T-cell (primary cell): ENCODE measurements at regions of chr15 and their contacts with region 1.

Region 1: GRCh38 chr15:101088788-101089583 is 162.9 kb downstream of the CHSY1 start:
- DNase-seq: peak; percentile 26 to 82 (median 68)
- ATAC-seq: peak; percentile 88 to 94 (median 89)
- H3K4me3 ChIP-seq: no peak overlapping the region
- H3K4me3 Mint-ChIP-seq: no peak overlapping the region
- H3K27ac ChIP-seq: no peak overlapping the region
- H3K27ac Mint-ChIP-seq: no peak overlapping the region
- H3K4me1 ChIP-seq: peaks cover 0 to 4% of the 10 kb centered on the region in 2 experiments
- H3K4me1 Mint-ChIP-seq: no peaks in the 10 kb centered on the region
- H3K27me3 ChIP-seq: peaks cover 0 to 37% of the 10 kb centered on the region in 2 experiments
- H3K27me3 Mint-ChIP-seq: no peaks in the 10 kb centered on the region

Region 2: DNA sequence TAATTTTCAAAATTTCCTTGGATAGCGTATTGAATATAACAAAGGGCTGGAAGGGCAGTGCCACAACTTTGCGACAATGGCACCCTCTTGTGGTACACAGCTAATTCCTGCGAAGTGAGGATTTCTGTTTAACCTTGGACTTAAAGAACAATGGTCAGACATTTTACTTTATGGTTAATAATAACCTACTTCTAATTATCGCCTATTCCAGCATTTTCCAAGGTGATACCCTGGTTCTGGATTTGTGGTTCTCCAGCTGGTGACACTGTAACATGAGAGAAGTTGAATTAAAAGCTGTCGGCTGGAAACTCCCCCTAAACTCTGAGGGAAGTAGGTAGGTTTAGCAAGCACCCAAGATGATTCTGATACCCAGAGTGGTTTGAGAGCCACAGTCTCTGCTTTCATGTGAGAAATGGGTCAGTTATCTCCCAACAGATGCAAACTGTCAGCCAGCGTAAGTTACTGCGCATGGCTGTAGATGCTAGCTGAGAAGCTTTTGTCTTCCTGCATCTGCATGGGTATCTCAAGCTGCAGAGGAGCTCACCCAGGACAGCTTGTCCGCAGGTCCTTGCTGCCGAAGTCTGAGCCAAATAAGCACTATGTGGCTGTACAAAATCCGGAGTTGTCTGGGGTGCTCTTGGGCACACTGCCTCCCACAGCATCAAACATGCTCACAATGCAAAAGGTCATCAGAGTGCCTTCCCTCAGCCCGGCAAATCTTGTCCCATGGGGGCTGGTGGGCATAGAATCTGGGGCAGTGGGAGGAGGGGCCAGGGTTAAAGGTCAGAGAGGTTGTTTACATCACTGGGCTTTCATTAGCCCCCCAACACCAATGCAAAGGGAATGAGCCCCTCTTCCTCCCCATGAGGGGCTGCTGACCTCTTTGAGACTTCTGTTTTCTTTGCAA is 169.5 kb after region 1 on chr15:
- CTCF ChIA-PET with region 1: interaction called, 10 to 14 read pairs
- POLR2A ChIA-PET with region 1: interaction called in 1 of 2 experiments, 3 read pairs
- DNase-seq: peak in 26 of 35 experiments; percentile 16 to 82 (median 37)
- ATAC-seq: peak; percentile 50 to 70 (median 66)
- H3K4me3 ChIP-seq: no peak overlapping the region
- H3K4me3 Mint-ChIP-seq: no peak overlapping the region
- H3K27ac ChIP-seq: no peak overlapping the region
- H3K27ac Mint-ChIP-seq: no peak overlapping the region
- H3K4me1 ChIP-seq: no peaks in the 10 kb centered on the region
- H3K4me1 Mint-ChIP-seq: peaks cover 2 to 6% (median 4%) of the 10 kb centered on the region in 3 donors
- H3K27me3 ChIP-seq: peaks cover 0 to 14% of the 10 kb centered on the region in 2 experiments
- H3K27me3 Mint-ChIP-seq: peaks cover 0 to 17% of the 10 kb centered on the region in 2 donors

Region 3: GRCh38 chr15:101723874-101724674 is 635.1 kb after region 1 on chr15 and contains the start of gene TARS3:
- CTCF ChIA-PET with region 1: no interaction called
- POLR2A ChIA-PET with region 1: no interaction called
- DNase-seq: peak; percentile 87 to 99 (median 96)
- ATAC-seq: peak; percentile 90 to 91 (median 90)
- H3K4me3 ChIP-seq: peak within 1 kb of the TSS; percentile 53 to 63
- H3K4me3 Mint-ChIP-seq: peak within 1 kb of the TSS; percentile 80 to 92 (median 85)
- H3K27ac ChIP-seq: peak within 1 kb of the TSS; percentile 40
- H3K27ac Mint-ChIP-seq: peak within 1 kb of the TSS; percentile 93 to 95
- H3K4me1 ChIP-seq: peaks cover 8 to 18% of the 10 kb centered on the region in 2 experiments
- H3K4me1 Mint-ChIP-seq: peaks cover 30 to 38% (median 36%) of the 10 kb centered on the region in 3 donors
- H3K27me3 ChIP-seq: no peaks in the 10 kb centered on the region
- H3K27me3 Mint-ChIP-seq: no peaks in the 10 kb centered on the region
- total RNA-seq, gene TARS3: 20.1 to 26.8 (median 25.5) TPM